ENCODE measurements at regions of chr2 and their contacts with region 1.

Region 1: DNA sequence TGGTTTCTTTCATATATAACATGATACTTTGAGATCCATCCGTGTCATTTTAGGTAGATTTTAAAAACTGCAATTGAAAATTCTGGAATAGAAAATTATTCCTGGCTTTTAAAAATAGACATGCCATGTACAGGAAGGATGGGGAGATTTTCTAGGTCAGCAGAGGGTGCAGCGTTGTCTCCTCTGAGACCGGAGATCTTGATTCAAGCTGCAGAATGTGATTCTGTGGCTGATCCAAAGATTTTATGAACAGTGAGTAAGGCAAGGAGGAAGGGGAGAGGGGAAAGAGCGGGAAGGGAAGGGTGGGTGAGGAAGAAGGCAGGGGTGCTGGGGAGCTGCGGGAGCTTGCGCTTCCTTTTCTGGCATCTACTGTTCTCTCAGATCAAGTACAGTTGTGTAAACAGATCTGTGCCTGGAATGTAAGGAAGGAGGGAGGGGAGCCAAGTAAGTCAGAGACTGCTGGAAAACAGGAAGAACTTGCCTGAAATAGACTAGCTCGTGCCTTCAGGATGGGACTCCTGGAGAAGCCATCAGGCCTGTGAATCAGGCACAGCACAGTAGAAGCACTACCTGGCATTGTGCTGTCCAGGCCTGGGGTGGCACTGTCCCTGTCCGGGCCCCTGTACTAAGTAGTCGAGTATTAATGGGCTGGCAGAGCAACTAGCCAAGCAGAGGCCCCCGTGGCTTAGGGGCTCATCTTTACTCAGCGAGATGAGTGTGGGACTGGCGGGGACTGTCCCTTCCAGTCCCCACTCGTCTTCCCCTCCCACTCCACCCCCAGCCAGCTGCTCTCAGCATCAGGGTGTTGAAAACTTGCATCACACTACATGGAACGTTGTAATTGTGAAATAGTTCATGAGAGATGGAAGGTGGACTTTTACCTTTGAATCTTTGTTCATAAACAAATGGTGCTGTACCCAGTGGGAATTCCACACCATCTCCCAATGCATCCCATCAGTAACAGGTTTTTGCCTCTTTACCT is 163.5 kb downstream of the UXS1 start:
- DNase-seq: peak; percentile 36 to 76
- ATAC-seq: peak; percentile 85 to 91 (median 90)
- H3K4me3 ChIP-seq: peak overlapping the region in 1 of 10 donors; percentile 14
- H3K27ac ChIP-seq: peak overlapping the region; percentile 58 to 88 (median 78)
- H3K4me1 ChIP-seq: peaks cover 6 to 64% (median 34%) of the 10 kb centered on the region in 9 donors
- H3K27me3 ChIP-seq: no peaks in the 10 kb centered on the region
- CTCF ChIP-seq: no peak

Region 2: GRCh38 chr2:105775809-105776559 is 254.6 kb before region 1 on chr2:
- intact Hi-C with region 1: loop called in 1 of 10 experiments (anchors 10 kb)
- DNase-seq: no peak
- ATAC-seq: peak in 3 of 8 donors; percentile 28 to 42 (median 41)
- H3K4me3 ChIP-seq: peak overlapping the region in 1 of 10 donors; percentile 8
- H3K27ac ChIP-seq: peak overlapping the region in 6 of 10 donors; percentile 6 to 73 (median 44)
- H3K4me1 ChIP-seq: peaks cover 18 to 97% (median 91%) of the 10 kb centered on the region in 9 donors
- H3K27me3 ChIP-seq: no peaks in the 10 kb centered on the region
- CTCF ChIP-seq: no peak

Region 3: DNA sequence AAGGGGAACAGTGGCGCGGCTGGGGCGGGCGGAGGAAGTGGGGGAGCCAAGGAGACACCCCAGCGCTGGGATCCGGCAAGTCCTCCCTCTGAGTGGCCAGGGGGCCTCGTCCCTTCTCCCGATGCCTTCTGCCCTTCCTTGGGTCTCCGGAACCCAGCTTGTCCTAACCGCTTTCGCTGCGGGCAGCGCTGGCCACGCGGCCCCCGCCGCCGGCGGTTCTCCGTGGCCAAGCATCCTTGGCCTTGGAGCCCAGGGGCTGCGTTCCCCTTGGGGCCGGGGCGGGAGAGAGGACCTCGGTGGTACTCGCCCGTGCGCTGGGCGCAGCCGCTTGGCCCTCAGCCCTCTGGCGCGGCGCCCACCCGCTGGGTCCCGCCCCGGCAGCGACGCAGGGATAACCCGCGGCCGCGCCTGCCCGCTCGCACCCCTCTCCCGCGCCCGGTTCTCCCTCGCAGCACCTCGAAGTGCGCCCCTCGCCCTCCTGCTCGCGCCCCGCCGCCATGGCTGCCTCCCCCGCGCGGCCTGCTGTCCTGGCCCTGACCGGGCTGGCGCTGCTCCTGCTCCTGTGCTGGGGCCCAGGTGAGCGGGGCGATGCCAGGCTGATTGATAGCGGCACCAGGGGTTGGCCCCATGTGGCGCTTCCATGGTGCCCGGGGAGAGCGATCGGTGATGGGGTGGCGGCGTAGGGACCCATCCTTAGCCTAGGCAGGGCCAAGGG is 34.8 kb after region 1 on chr2:
- intact Hi-C with region 1: loop called in 1 of 10 experiments (anchors 2 kb)
- DNase-seq: peak in 1 of 2 donors; percentile 64
- ATAC-seq: peak; percentile 52 to 77 (median 66)
- H3K4me3 ChIP-seq: peak overlapping the region; percentile 33 to 62 (median 54)
- H3K27ac ChIP-seq: peak overlapping the region in 6 of 10 donors; percentile 7 to 55 (median 21)
- H3K4me1 ChIP-seq: peaks cover 0 to 16% (median 10%) of the 10 kb centered on the region in 9 donors
- H3K27me3 ChIP-seq: peaks cover 0 to 29% (median 9%) of the 10 kb centered on the region in 7 donors
- CTCF ChIP-seq: no peak

Region 4: DNA sequence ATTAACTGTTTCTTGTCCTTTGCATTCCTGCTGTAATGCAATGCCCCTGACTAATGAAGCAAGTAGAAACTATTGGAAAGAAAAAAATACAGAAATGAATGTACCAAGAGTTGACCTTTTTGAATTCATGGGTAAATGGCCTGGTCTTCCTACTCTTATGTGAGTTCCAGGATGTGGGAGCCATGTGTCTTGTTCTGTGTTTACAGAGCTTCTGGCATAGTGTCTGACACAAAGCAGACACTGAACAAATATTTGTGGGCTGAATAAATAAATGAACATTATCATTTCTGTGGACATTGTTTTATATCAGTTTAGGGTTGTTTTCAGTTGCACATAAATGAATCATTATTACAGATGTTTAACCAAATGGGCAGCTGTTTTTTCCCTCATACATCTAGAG is 612.1 kb after region 1 on chr2:
- intact Hi-C with region 1: no loop called
- DNase-seq: no peak
- ATAC-seq: no peak
- H3K4me3 ChIP-seq: no peak overlapping the region
- H3K27ac ChIP-seq: no peak overlapping the region
- H3K4me1 ChIP-seq: no peaks in the 10 kb centered on the region
- H3K27me3 ChIP-seq: no peaks in the 10 kb centered on the region
- CTCF ChIP-seq: no peak